WTC11 (cell line): ENCODE measurements at regions of chr3 and their contacts with region 1.

Region 1: DNA sequence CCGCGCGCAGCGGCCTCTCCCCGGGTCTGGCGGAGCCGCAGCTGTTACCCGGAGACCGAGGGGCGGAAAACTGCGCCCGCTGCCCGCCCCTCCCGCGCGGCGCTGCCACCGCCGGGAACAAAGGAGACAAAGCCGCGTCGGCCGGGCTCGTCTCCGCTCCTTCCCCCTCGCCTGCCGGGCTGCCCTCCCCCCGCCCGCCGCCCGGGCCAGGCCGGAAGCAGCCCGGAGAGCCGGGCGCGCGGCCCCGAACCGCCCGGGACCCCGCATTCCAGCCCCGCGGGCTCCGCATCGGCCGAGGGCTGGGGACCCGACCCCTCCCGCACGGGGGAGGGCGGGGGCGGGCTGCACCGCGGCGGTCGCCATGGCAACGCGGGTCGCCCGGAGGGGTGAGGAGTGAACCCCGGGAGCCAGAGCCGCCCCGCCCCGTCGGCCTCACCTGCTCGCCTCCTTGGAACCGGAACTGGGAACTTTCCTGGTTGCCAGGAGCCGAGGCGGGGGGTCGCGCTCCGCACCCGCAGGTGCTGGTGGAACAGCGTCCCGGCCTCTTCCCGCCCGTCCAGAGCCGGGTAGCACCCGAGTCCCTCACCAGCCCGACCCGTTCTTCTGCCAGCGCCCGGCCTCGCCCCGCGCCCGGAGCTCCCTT is 448 bp downstream of the PLXNB1 start:
- DNase-seq: peak; percentile 86
- ATAC-seq: peak; percentile 16
- H3K4me3 Mint-ChIP-seq: peak overlapping the region; percentile 87
- H3K27ac Mint-ChIP-seq: peak overlapping the region; percentile 87
- H3K4me1 Mint-ChIP-seq: peaks cover 59% of the 10 kb centered on the region
- H3K27me3 Mint-ChIP-seq: no peaks in the 10 kb centered on the region
- CTCF ChIP-seq: no peak

Region 2: GRCh38 chr3:47128137-47128536 is 1301.3 kb before region 1 on chr3:
- CTCF ChIA-PET with region 1: no interaction called
- POLR2A ChIA-PET with region 1: no interaction called
- DNase-seq: no peak
- ATAC-seq: no peak
- H3K4me3 Mint-ChIP-seq: no peak overlapping the region
- H3K27ac Mint-ChIP-seq: no peak overlapping the region
- H3K4me1 Mint-ChIP-seq: peaks cover 5% of the 10 kb centered on the region; the same call in 1 of the 2 replicates
- H3K27me3 Mint-ChIP-seq: no peaks in the 10 kb centered on the region
- CTCF ChIP-seq: no peak

Region 3: DNA sequence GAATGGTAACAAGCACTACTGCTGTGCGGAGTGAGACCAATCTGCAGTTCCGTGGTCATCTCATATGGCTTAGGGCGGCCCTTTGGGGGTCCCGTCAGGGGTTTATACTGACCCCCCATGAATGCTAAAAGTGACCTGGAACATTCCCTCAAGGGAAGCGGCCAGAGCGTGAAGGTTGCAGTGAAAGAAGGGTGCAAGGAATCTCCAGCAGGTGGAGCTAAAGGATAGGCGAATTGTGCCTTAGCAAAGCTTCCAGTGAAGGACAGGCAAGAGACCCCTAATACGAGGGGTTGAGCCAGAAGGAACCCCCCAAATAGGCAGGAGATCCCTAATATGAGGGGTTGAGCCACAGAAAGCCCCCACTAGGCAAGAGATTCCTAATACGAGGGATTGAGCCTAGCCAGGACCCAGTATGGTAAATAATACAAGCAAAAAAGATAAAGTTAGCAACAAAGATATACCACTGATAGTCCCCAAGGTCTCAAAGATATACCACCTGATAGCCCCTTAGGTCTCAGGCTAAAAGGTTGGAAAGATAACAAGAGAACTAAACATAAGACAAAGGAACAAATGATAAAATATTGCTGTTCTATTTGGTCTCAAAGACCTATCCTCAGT is 155.7 kb before region 1 on chr3:
- CTCF ChIA-PET with region 1: interaction called, 10 read pairs
- POLR2A ChIA-PET with region 1: no interaction called
- DNase-seq: peak; percentile 65
- ATAC-seq: peak; percentile 51
- H3K4me3 Mint-ChIP-seq: no peak overlapping the region
- H3K27ac Mint-ChIP-seq: no peak overlapping the region
- H3K4me1 Mint-ChIP-seq: peaks cover 42% of the 10 kb centered on the region
- H3K27me3 Mint-ChIP-seq: no peaks in the 10 kb centered on the region
- CTCF ChIP-seq: peak; percentile 55

Region 4: DNA sequence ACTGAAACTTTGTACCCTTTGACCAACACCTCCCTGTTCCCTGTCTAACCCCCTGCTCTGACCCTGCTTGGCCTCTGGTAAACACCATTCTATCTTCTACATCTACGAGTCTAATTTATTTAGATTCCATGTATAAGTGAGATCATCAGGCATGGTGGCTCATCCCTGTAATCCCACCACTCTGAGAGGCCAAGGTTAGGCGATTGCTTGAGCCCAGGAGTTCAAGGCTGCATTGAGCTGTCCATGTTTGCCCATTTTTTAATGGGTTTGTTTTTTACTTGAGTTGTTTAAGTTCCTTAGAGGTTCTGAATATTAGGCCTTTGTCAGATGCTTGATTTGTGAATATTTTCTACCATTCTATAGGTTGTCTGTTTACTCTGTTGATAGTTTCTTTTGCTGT is 40.5 kb before region 1 on chr3:
- CTCF ChIA-PET with region 1: no interaction called
- POLR2A ChIA-PET with region 1: no interaction called
- DNase-seq: no peak
- ATAC-seq: no peak
- H3K4me3 Mint-ChIP-seq: no peak overlapping the region
- H3K27ac Mint-ChIP-seq: no peak overlapping the region
- H3K4me1 Mint-ChIP-seq: no peaks in the 10 kb centered on the region
- H3K27me3 Mint-ChIP-seq: peaks cover 3% of the 10 kb centered on the region
- CTCF ChIP-seq: no peak

Region 5: GRCh38 chr3:48408823-48409281 is 20.6 kb before region 1 on chr3:
- CTCF ChIA-PET with region 1: interaction called, 10 read pairs
- POLR2A ChIA-PET with region 1: interaction called, 5 read pairs
- DNase-seq: peak; percentile 32
- ATAC-seq: peak; percentile 46
- H3K4me3 Mint-ChIP-seq: no peak overlapping the region
- H3K27ac Mint-ChIP-seq: no peak overlapping the region
- H3K4me1 Mint-ChIP-seq: no peaks in the 10 kb centered on the region
- H3K27me3 Mint-ChIP-seq: no peaks in the 10 kb centered on the region
- CTCF ChIP-seq: no peak

Region 6: DNA sequence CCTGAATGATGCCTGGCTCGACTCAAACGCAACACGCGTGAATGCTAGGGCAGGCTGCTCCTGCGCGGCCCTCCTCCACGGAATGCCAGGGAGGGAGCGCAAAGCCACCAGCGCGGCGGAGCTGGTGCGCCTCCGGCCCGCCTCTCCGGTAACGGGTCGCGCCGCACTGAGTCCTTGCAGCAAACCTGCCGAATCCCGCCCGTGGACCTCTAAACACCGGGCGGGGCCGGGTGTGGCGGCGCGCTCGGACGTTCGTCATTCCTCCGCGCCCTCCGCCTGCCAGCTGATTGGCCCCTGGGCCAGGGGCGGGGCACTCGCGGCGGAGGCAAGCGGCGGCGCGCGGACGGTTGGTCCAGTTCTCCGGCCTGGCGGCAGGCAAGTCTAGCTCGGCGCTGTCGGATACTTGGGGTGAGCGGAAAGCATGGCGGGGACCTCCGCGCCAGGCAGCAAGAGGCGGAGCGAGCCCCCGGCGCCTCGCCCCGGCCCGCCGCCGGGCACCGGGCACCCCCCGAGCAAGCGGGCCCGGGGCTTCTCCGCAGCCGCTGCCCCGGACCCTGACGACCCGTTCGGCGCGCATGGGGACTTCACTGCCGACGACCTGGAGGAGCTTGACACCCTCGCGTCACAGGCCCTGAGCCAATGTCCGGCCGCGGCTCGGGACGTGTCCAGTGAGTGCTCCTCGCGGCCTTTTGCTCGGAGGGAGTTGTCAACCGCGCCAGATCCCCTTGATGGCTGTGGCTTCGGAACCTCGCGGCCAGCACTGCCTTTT is 17.2 kb after region 1 on chr3 and contains the start of gene ATRIP:
- CTCF ChIA-PET with region 1: interaction called, 20 read pairs
- POLR2A ChIA-PET with region 1: interaction called, 11 read pairs
- DNase-seq: peak; percentile 93
- ATAC-seq: peak; percentile 92
- H3K4me3 Mint-ChIP-seq: peak within 1 kb of the TSS; percentile 94
- H3K27ac Mint-ChIP-seq: peak within 1 kb of the TSS; percentile 89
- H3K4me1 Mint-ChIP-seq: peaks cover 26% of the 10 kb centered on the region
- H3K27me3 Mint-ChIP-seq: no peaks in the 10 kb centered on the region
- CTCF ChIP-seq: no peak
- total RNA-seq, gene ATRIP: 15.5 to 18.2 TPM (median 15.6 TPM) in 3 replicates

Region 7: GRCh38 chr3:48463703-48464102 is 34.3 kb after region 1 on chr3:
- CTCF ChIA-PET with region 1: no interaction called
- POLR2A ChIA-PET with region 1: no interaction called
- DNase-seq: no peak
- ATAC-seq: no peak
- H3K4me3 Mint-ChIP-seq: no peak overlapping the region
- H3K27ac Mint-ChIP-seq: no peak overlapping the region
- H3K4me1 Mint-ChIP-seq: peaks cover 18% of the 10 kb centered on the region
- H3K27me3 Mint-ChIP-seq: no peaks in the 10 kb centered on the region
- CTCF ChIP-seq: no peak